ENCODE measurements at regions of chr5 and their contacts with region 1.

Region 1: GRCh38 chr5:106277540-106278096 is 1393.1 kb downstream of the EFNA5 start:
- DNase-seq: no peak
- ATAC-seq: no peak
- H3K4me3 ChIP-seq: no peak overlapping the region
- H3K27ac ChIP-seq: no peak overlapping the region
- H3K4me1 ChIP-seq: no peaks in the 10 kb centered on the region
- H3K27me3 ChIP-seq: no peaks in the 10 kb centered on the region
- CTCF ChIP-seq: no peak

Region 2: DNA sequence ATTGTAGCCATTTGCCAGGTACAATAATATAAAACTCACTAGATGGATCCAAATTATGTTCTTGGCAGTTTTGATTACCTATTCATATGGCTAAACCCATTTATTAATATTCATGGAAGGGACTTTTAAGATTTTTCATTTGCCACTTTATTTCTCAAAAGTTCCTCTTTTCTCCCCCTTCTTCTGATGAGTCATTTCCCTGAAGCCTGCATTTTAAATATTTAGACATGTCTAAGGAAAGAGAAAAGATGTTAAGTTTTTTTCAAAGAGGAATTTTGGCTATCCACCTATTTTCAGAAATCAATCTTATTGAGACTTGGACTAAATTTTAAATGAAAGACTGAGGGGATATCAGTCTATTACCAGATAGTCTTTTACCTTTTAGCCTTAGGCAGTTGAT is 203.8 kb after region 1 on chr5:
- CTCF ChIA-PET with region 1: no interaction called
- POLR2A ChIA-PET with region 1: no interaction called
- intact Hi-C with region 1: loop called (anchors 10 kb)
- DNase-seq: no peak
- ATAC-seq: peak; percentile 37; the same call in 1 of the 2 replicates
- H3K4me3 ChIP-seq: no peak overlapping the region
- H3K27ac ChIP-seq: no peak overlapping the region
- H3K4me1 ChIP-seq: peaks cover 6% of the 10 kb centered on the region; the same call in 1 of the 2 replicates
- H3K27me3 ChIP-seq: no peaks in the 10 kb centered on the region
- CTCF ChIP-seq: no peak

Region 3: GRCh38 chr5:106639488-106639887 is 361.9 kb after region 1 on chr5:
- CTCF ChIA-PET with region 1: no interaction called
- POLR2A ChIA-PET with region 1: interaction called, 16 read pairs
- intact Hi-C with region 1: no loop called
- DNase-seq: peak; percentile 35
- ATAC-seq: no peak
- H3K4me3 ChIP-seq: no peak overlapping the region
- H3K27ac ChIP-seq: no peak overlapping the region
- H3K4me1 ChIP-seq: peaks cover 8% of the 10 kb centered on the region
- H3K27me3 ChIP-seq: no peaks in the 10 kb centered on the region
- CTCF ChIP-seq: peak; percentile 54

Region 4: DNA sequence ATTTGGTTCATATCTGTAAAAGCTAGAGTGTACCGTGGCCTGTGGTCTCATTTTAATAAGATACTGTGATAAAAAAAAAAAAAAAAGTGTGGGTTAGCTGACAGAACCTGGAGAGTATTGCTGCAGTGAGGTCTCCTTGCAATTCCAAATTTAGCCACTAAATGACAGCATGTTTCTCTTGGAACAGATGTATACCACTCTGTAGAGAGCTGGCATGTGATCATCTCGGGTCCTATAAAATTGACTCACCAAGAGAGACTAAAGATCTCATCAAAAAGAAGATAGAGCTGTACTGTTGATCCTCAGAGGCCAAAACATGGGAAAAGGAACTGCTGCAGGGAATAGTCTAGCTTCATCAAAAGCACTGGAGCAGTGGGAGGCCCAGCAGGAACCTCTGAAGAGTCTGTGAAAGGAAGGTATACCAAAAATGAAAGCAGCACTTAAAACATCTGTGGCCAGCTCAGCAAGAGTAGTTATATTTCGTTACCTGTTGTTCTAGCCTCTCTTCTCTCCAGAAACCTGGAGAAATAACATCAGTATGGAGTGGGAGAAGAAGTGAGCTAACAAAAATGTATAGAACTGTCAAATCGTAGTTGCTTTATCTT is 566.3 kb after region 1 on chr5:
- CTCF ChIA-PET with region 1: no interaction called
- POLR2A ChIA-PET with region 1: no interaction called
- intact Hi-C with region 1: no loop called
- DNase-seq: peak; percentile 71
- ATAC-seq: peak; percentile 87
- H3K4me3 ChIP-seq: no peak overlapping the region
- H3K27ac ChIP-seq: no peak overlapping the region
- H3K4me1 ChIP-seq: no peaks in the 10 kb centered on the region
- H3K27me3 ChIP-seq: no peaks in the 10 kb centered on the region
- CTCF ChIP-seq: peak; percentile 60